Sigmoid colon (tissue), 7 donors: ENCODE measurements at regions of chr9 and their contacts with region 1.

Region 1: GRCh38 chr9:109320742-109321448 is at the start of gene EPB41L4B:
- DNase-seq: peak; percentile 85
- H3K4me3 ChIP-seq: peak within 1 kb of the TSS in 3 of 4 donors; percentile 41 to 52 (median 51)
- H3K27ac ChIP-seq: peak within 1 kb of the TSS in 1 of 4 donors; percentile 44
- H3K4me1 ChIP-seq: peaks cover 0 to 15% (median 5%) of the 10 kb centered on the region in 4 donors
- H3K27me3 ChIP-seq: peaks cover 7 to 12% (median 12%) of the 10 kb centered on the region in 3 donors
- CTCF ChIP-seq: peak; percentile 76 to 95 (median 86)
- EP300 ChIP-seq: no peak
- POLR2A ChIP-seq: no peak
- total RNA-seq, gene EPB41L4B: 0.49 to 2.5 (median 1.4) TPM

Region 2: GRCh38 chr9:109119439-109120203 is 201.3 kb before region 1 on chr9 and contains the start of gene TMEM245:
- intact Hi-C with region 1: loop called (anchors 10 kb)
- DNase-seq: peak; percentile 98
- H3K4me3 ChIP-seq: peak within 1 kb of the TSS; percentile 73 to 97 (median 90)
- H3K27ac ChIP-seq: peak within 1 kb of the TSS; percentile 91 to 98 (median 94)
- H3K4me1 ChIP-seq: peaks cover 0 to 48% (median 46%) of the 10 kb centered on the region in 4 donors
- H3K27me3 ChIP-seq: no peaks in the 10 kb centered on the region
- CTCF ChIP-seq: no peak
- EP300 ChIP-seq: peak in 1 of 4 donors; percentile 7
- POLR2A ChIP-seq: peak; percentile 24 to 41
- total RNA-seq, gene TMEM245: 90.7 to 105 (median 99.5) TPM

Region 3: GRCh38 chr9:109244157-109245132 is 76.5 kb before region 1 on chr9:
- intact Hi-C with region 1: loop called (anchors 1 kb)
- DNase-seq: peak; percentile 79
- H3K4me3 ChIP-seq: no peak overlapping the region
- H3K27ac ChIP-seq: no peak overlapping the region
- H3K4me1 ChIP-seq: peaks cover 0 to 5% (median 0%) of the 10 kb centered on the region in 4 donors
- H3K27me3 ChIP-seq: no peaks in the 10 kb centered on the region
- CTCF ChIP-seq: peak; percentile 42 to 88 (median 79)
- EP300 ChIP-seq: no peak
- POLR2A ChIP-seq: no peak

Region 4: DNA sequence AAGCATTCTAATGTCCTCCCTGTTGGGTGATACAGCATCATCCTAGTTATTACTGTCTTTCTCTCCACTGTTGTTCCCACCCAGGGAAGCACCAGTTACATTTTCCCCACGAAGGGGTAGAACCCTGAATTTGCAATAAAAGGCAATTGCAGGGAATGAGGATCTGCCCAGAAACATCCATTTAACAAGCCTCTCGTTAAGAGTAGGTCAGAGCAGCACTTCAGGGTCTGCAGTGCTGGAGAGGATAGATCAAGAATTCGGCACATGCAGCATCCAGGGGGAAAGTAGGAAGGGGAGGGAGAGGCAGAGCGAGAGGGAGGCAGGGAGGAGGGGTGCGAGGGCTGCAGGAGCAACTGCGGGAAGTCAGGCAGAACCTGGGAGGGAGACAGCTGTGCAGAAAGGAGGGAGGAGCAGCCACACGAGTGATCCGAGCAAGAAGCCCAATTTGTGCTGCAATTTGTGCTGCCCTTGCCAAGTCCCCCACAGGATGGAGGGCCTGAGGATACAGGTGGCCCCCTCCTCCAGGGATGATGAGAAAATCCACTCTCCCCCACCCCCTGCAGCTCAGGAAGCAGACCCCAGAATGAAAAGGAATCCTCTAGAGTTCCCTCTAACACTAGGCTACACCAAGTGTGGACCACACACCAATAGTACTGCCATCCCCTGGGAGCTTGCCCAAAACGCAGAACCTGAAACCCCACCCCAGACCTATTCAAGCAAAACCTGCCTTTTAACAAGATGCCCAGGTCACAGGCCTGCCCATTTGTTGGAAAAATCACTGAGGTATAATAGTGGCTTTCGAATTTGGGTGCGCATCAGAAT is 62.2 kb before region 1 on chr9:
- intact Hi-C with region 1: no loop called
- DNase-seq: no peak
- H3K4me3 ChIP-seq: no peak overlapping the region
- H3K27ac ChIP-seq: no peak overlapping the region
- H3K4me1 ChIP-seq: no peaks in the 10 kb centered on the region
- H3K27me3 ChIP-seq: no peaks in the 10 kb centered on the region
- CTCF ChIP-seq: no peak
- EP300 ChIP-seq: no peak
- POLR2A ChIP-seq: no peak

Region 5: DNA sequence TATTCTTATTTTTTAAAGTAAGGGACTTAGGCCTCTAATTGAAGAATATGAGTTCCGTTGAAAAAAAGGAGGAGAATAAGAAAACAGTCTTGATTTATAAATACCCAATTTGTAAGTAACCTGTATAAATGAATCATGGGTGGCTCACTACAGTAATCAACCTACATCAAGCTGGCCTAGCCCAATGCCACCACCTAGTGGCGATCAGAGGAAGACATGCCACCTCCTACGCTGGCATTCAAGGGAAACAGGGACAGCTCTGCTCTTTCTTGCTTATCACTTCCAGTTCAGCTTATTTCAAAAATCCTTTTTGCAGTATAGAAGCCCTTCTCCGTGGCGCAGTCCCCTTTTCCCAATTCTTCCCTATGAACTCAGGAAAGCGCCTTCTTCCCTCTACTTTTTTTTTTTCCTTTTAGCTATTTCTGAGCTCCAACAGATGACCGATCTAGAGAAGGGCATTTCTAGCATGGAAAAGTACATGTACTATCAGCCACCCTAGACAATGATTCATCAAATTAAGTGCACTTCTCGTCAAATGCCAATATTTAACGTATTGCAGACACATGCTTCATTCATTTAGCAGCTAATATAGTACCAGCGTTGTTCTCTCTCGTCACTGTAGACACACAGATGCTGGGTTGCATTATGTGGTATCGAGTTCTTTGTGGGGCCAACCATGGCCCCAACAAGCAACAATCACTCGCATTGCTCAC is 148.9 kb after region 1 on chr9:
- intact Hi-C with region 1: loop called (anchors 5 kb)
- DNase-seq: peak; percentile 81
- H3K4me3 ChIP-seq: no peak overlapping the region
- H3K27ac ChIP-seq: no peak overlapping the region
- H3K4me1 ChIP-seq: no peaks in the 10 kb centered on the region
- H3K27me3 ChIP-seq: no peaks in the 10 kb centered on the region
- CTCF ChIP-seq: peak; percentile 54 to 83 (median 76)
- EP300 ChIP-seq: no peak
- POLR2A ChIP-seq: no peak